ENCODE measurements at regions of chr7 and their contacts with region 1.

Region 1: DNA sequence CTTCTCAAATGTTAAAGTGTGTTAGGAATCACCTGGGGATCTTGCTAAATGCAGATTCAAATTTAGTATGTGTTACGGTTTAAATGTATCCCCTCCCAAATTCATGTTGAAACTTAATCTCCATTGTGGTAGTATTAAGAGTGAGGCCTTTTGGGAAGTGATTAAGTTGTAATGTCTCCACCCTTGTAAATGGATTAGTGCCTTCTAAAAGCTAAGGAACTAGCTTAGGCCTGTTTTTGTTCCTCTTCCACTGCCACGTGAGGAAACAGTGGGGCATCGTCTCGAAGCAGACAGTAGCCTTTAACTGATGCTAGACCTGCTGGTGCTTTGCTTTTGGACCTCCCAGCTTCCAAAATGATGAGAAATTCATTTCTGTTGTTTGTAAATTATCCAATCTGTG is 52.3 kb upstream of the SEMA3D start:
- DNase-seq: no peak
- ATAC-seq: no peak
- H3K4me3 ChIP-seq: no peak overlapping the region
- H3K4me3 Mint-ChIP-seq: no peak overlapping the region
- H3K27ac ChIP-seq: no peak overlapping the region
- H3K27ac Mint-ChIP-seq: no peak overlapping the region
- H3K4me1 ChIP-seq: no peaks in the 10 kb centered on the region
- H3K4me1 Mint-ChIP-seq: no peaks in the 10 kb centered on the region
- H3K27me3 ChIP-seq: no peaks in the 10 kb centered on the region
- H3K27me3 Mint-ChIP-seq: no peaks in the 10 kb centered on the region
- CTCF ChIP-seq: no peak

Region 2: DNA sequence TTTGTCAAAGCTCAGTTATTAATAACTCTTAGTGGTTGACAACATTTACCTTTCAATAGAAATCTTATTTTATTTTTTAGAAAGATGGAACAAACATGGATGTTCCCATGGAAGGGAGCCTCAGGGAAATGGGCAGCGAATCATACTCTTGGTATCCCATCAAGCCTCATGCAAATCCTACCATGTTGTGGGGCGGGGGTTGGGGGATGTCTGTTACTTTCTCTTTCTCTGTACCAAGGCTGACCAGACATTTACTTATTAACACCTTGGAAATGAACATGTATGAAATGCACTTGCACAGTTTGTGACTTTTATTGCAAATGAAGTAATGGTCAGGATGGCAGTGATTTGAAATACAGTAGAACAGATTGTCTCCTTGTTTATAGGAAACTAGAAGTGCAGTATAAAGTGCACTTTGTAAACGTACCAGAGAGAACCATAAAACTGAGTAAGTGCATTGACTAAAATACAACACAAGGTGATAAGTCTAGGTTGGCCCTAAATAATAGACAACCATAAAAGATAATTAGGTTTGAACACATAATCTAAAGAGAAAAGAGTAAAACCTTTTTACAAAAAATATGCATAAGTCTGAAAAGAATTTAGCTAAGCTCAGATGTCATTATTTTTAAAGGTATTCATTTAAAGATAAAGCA is 84.7 kb before region 1 on chr7:
- CTCF ChIA-PET with region 1: no interaction called
- POLR2A ChIA-PET with region 1: no interaction called
- intact Hi-C with region 1: no loop called
- DNase-seq: no peak
- ATAC-seq: no peak
- H3K4me3 ChIP-seq: no peak overlapping the region
- H3K4me3 Mint-ChIP-seq: no peak overlapping the region
- H3K27ac ChIP-seq: no peak overlapping the region
- H3K27ac Mint-ChIP-seq: no peak overlapping the region
- H3K4me1 ChIP-seq: no peaks in the 10 kb centered on the region
- H3K4me1 Mint-ChIP-seq: no peaks in the 10 kb centered on the region
- H3K27me3 ChIP-seq: no peaks in the 10 kb centered on the region
- H3K27me3 Mint-ChIP-seq: no peaks in the 10 kb centered on the region
- CTCF ChIP-seq: no peak

Region 3: DNA sequence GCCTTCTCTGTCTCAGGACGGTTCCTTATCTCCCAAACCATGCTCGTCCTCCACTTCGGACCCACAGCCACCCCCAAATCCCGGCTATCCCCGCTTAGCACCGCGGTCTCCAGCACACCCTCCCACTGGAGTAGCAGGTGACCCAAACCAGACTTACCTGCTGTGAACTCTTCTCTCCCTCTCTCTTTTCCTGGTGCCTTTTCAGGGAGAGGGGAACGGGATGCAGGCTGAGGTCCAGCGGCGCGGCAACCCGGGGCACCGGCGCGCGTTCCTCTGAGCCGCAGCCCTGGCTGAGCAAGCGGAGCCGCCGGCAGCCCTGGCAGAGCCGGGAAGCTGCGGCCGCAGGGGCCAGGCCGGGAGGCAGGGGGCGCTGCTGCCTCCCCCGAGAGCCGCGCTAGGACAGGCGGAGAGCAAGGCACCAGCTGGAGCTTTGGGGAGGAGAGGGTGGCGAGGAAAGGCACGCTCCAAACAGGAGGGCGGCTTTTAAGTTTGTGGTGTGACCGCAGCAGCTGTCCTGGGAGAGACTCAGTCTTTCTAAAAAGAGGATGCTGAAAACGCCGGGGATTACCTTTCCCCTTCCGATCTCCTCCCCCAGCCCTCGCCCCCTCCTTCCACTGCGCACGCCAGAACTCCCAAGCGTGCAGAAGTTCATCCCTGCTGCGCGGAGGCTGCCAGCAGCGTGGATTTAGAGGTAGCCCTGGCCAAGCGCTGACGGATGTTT is 52.4 kb before region 1 on chr7 and contains the start of gene SEMA3D:
- CTCF ChIA-PET with region 1: no interaction called
- POLR2A ChIA-PET with region 1: no interaction called
- intact Hi-C with region 1: loop called in 1 of 2 experiments (anchors 2 kb)
- DNase-seq: peak in 2 of 14 experiments; percentile 11 to 15
- ATAC-seq: no peak
- H3K4me3 ChIP-seq: no peak within 1 kb of the TSS
- H3K4me3 Mint-ChIP-seq: no peak within 1 kb of the TSS
- H3K27ac ChIP-seq: no peak within 1 kb of the TSS
- H3K27ac Mint-ChIP-seq: no peak within 1 kb of the TSS
- H3K4me1 ChIP-seq: no peaks in the 10 kb centered on the region
- H3K4me1 Mint-ChIP-seq: no peaks in the 10 kb centered on the region
- H3K27me3 ChIP-seq: peaks cover 12 to 14% of the 10 kb centered on the region in 2 experiments
- H3K27me3 Mint-ChIP-seq: peaks cover 31% of the 10 kb centered on the region
- CTCF ChIP-seq: no peak
- total RNA-seq, gene SEMA3D: not detected

Region 4: DNA sequence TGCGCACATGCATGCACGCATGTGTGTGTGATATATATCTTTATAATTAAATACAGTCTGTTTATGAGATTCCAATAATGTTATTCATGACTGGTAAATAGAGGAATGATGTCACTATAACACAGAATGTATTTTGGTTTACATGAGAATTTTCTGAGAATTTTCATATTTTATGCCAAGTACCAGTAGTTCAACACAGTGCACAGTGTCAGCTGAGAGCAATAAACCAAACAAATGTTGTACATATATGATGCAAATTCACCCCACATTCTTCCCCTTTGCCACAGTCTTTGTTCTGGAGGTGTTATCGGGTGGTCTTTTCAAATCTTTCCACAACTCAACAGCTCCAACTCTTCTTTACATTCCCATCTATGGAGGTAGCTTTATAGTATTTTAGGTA is 942.4 kb after region 1 on chr7:
- CTCF ChIA-PET with region 1: no interaction called
- POLR2A ChIA-PET with region 1: no interaction called
- intact Hi-C with region 1: no loop called
- DNase-seq: no peak
- ATAC-seq: no peak
- H3K4me3 ChIP-seq: no peak overlapping the region
- H3K4me3 Mint-ChIP-seq: no peak overlapping the region
- H3K27ac ChIP-seq: no peak overlapping the region
- H3K27ac Mint-ChIP-seq: no peak overlapping the region
- H3K4me1 ChIP-seq: no peaks in the 10 kb centered on the region
- H3K4me1 Mint-ChIP-seq: no peaks in the 10 kb centered on the region
- H3K27me3 ChIP-seq: no peaks in the 10 kb centered on the region
- H3K27me3 Mint-ChIP-seq: no peaks in the 10 kb centered on the region
- CTCF ChIP-seq: no peak